ENCODE measurements at regions of chr14 and their contacts with region 1.

Region 1: DNA sequence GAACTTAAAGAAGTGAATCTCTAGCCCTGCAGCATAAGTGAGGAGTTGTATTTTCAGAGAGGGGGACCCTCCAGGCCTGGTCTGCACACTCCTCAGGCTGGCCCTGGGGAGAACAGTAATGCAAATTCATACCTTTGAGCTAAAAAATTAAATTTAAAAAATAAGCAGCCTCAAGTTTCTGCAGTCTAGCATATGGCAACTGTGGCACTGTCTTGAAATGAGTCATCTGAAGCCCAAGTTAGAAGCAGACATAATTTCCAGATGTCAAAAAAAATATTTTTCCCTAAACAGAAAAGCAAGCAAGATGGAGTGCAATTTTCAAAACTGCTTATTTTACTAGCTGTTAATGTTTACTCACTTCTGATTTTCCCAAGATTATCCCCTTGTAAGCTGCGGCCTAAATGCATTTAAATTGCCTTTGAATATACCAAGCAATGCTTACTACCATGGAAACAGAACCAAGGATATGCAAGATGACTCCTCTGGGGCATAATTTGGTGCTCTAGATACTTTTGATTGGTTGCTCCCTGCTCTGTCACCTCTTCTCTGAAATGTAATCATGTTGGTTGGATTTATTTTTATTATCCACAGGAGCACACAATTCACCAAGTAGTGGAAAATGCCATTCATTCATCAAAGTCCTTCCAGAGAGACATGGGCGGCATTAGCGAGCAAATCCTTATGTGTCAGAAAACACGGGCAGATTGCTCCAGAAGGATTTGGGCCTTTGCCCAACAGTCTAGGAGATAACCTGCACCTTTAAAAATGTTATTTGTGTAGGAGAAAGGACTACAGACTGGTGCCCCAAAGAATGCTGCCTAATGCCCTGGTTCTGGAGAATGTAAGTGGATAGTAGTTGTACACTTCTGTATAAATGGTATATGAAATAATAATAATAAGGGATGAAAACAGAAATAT is 25.0 kb upstream of the DHRS7 start:
- DNase-seq: no peak
- ATAC-seq: peak; percentile 29
- H3K4me3 ChIP-seq: no peak overlapping the region
- H3K27ac ChIP-seq: no peak overlapping the region
- H3K4me1 ChIP-seq: no peaks in the 10 kb centered on the region
- H3K27me3 ChIP-seq: no peaks in the 10 kb centered on the region
- CTCF ChIP-seq: no peak

Region 2: DNA sequence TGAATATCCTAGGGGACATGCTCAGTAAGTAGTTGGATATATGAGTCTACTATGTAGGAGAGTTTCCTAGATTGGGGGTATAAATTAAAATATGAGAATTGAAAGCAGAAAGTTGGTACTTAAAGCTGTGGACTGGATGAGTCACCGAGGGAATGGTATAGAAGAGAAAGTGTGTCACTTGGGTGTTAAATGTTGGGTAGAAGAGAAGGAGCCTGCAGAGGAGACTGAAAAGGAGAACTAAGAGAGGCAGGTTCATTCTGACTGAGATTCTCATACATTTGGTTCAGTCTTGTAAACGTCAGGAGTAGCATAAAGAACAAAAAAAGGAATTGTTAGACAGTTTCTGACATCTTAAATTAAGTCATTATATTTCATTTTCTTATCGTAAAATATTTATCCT is 250.4 kb before region 1 on chr14:
- CTCF ChIA-PET with region 1: interaction called, 13 read pairs
- POLR2A ChIA-PET with region 1: no interaction called
- intact Hi-C with region 1: loop called (anchors 2 kb)
- DNase-seq: no peak
- ATAC-seq: no peak
- H3K4me3 ChIP-seq: no peak overlapping the region
- H3K27ac ChIP-seq: no peak overlapping the region
- H3K4me1 ChIP-seq: no peaks in the 10 kb centered on the region
- H3K27me3 ChIP-seq: peaks cover 37% of the 10 kb centered on the region
- CTCF ChIP-seq: no peak